Right ventricle myocardium superior (tissue), 1 donor: ENCODE measurements at regions of chr7 and their contacts with region 1.

Region 1: DNA sequence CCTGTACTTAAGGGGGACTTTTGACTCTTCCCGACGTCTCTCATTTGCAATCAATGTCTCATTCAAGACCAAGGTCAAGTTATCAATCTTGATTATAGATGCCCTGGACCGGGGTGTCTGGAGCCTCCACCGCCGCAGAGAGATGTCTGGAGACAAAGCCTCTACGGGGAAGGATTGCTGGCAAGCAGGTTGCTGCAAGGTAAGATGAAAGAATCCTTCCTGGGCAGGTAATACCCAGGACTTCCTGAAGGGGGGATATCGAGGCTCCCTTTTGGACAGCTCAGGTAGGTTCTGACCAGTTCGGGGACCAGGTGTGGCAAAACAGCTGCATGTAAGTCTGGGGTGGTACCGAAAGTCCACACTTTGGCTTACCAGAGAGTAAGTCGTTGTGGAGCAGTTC is 12.5 kb upstream of the CUX1 start:
- DNase-seq: no peak
- ATAC-seq: no peak

Region 2: DNA sequence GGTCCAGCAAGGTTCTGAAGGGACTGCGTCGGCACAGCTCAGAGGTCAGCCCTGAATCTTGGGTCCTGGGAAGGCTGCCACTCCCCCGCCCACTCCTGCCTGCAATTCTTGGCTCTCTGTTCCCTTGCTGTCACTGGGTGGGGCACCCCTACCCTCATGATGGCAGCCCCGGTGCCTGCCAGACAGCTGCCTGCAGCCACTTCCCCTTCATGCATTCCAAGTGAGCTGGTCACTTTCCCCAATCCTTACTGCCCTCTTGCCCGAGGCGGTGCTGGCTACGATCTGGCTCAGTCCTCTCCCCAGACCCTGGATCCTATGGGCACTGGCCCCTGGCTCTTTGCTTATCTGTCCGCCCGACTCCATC is 190.0 kb before region 1 on chr7:
- intact Hi-C with region 1: loop called (anchors 10 kb)
- DNase-seq: peak; percentile 40
- ATAC-seq: no peak

Region 3: DNA sequence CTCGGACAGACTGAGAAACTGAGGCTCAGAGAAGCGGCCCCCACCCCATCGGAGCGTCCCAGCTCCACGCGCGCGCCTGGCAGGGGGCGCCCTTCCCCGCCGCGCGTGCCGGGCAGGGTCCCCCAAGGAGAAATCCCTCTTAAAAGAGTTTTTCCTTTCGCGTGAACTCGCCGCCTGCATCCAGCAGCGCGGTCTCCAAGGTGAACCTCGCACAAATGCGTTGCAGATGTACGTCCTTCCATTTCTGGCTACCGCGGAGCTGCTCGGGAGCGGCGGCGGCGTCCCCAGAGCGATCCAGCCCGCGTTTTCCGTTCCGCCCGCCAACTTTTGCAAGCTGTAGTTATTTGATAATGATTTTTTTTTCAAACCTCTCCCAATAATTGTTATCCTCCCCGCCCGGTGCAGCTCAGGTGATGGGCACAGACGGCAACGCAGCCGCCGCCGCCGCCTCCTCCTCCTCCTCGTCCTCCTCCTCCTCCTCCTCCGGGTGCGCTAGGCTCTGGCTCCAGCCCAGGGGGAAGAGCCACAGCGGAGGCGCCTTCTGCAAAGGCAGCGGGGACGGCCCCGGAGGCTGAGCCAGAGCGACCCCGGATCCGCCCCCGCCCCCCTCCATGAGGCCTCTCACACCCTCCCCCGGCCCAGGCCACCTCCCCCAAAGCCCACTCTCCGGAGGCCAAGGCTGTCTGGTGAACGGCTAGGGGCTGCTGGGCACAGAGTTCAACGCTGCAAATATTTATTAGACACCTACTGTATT is 61.5 kb before region 1 on chr7:
- intact Hi-C with region 1: loop called (anchors 10 kb)
- DNase-seq: peak; percentile 64
- ATAC-seq: peak; percentile 80